GM18951 (cell line): ENCODE measurements at regions of chr4 and their contacts with region 1.

Region 1: DNA sequence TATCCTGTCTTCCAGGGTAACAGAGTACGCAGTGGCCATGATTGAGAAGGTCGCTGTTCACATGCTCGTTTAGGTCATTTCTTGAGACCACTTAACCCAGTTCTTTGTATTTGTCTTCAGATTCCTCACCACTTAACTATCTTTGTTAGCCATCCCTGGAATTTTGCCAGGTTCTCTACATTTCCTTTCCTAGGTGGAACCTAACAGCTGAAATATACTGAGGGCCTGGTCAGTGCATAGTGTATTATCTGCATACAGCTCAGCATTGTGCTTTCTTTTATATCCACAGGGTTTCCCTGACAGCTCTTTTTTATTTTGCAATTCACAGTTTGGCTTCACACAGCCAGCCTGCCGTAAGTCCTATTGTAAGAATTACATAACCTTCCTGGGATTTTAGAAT is 148.9 kb upstream of the GALNT7 start:
- POLR2A ChIP-seq: no peak

Region 2: GRCh38 chr4:173057901-173058300 is 38.2 kb after region 1 on chr4:
- in situ Hi-C with region 1: no loop called
- POLR2A ChIP-seq: no peak

Region 3: DNA sequence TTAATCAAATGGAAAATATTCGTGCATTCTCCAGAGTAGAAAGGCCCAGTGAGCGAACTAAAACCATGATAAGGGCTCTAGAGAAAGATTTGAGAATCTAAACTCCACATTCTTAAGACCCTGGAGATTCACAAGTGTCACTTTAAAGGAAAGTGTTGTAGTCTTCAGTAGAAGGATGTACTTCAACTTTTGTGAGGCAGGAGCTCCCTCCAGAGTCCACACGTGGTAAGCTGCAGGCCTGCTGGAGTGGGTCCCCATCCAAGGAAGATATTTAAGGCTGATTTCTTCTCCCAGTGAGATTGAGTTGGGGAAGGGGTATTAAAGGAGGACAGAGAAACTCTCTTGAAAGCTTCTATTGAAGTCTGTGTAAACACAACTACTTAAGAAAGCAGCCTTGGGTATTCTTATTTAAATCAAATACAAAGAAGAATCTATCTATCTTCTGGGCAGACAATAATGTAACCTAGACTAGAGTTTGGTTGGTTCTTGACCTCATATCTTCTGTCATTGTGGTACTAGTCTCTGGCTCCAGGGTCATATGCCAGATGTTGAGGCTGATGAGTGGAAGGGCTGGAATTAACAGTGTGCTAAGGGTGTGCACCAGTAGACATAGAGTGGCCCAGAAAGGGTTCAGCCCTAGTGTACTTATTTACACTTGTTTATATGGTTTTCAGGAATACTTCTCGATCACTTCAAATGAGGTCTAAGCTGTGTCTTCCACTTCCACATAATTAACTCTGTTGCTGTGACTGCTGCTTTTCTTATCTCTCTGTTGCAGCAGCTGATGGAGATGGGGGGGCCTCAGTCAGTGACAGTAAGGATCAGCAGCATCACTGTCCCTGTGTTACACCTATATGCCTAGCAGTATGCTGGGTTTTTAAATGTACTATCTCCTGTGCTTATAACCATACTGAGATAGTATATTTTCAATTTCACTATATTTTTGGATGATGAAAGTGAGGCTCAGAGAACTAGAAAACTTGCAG is 238.3 kb after region 1 on chr4:
- in situ Hi-C with region 1: loop called (anchors 5 kb)
- POLR2A ChIP-seq: no peak